GM13976 (cell line): ENCODE measurements at regions of chr14 and their contacts with region 1.

Region 1: DNA sequence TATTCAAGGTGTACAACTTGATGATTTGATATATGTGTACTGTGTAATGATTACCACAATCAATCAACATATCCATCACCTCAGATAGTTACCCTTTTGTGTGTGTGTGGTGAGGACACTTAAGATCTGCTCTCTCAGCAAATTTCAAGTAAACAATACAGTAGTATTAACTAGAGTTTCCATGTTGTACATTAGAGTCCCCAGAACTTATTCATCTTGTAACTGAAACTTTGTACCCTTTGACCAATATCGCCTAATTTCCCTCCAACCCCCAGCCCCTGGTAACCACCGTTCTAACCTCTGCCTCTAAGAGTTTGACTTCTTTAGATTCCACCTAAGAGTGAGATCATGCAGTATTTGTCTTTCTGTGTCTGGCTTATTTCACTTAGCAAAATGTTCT is 12.1 kb downstream of the ADCK1 start:
- DNase-seq: no peak
- CTCF ChIP-seq: no peak

Region 2: GRCh38 chr14:77508249-77508648 is 303.8 kb before region 1 on chr14:
- in situ Hi-C with region 1: no loop called
- DNase-seq: no peak
- CTCF ChIP-seq: no peak

Region 3: DNA sequence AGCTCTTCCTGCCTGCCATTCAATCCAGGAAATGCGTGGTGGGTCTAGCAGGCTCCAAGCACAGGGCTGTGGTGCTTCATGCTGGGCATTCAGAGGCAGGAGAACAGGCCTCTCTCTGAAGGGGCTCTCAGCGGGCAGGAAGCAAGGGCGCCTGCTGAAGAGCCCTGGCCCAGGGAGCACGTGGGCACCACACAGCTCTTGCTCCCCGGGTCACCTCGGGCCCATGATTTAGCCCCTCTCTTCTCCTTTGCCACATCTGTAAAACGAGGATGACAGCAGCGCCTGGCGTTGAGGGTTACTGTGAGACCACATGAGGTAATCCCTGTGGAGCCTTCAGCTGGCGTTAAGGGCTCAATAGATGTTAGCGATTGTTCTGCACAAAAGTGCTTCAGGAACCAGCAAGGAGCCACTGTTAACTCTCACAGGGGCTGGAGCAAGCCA is 158.0 kb before region 1 on chr14:
- in situ Hi-C with region 1: loop called (anchors 10 kb)
- DNase-seq: no peak
- CTCF ChIP-seq: no peak